CD8-positive, alpha-beta memory T cell (primary cell): ENCODE measurements at regions of chr7 and their contacts with region 1.

Region 1: DNA sequence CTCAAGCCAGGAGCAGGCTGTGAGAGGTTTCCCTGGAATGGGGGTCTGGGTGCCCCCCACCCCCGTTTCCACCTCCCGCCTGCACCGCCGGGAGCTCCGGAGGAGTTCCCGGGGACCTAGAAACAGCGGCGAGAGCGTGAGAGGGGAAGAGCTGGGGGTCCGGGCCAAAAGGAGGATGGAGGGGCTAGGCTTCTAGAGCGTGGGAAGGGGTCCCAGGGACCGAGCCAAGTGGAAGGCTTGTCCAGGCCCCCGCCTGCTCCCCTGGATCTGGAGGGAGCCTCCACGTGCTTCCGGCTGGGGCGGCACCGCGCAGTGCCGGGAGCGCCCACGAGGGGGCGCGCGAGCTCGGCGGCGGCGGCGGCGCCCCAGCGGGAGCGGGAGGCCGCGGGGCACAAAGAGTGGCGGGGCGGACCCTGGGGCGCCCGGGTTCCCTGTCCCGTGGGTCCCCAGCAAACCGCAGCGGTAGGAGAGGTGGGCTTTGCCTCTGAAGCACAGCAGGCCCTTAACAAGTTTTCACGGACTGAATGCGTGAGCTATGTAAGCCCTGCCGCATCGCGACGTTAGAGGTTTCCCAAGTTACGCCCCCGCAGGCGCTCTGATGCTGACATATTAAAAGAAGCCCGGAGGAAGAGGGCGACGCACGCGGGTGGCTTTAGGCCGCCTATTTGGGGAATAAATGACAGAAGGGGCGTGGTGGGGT is 104.4 kb upstream of the LRRC4 start:
- DNase-seq: peak; percentile 48 to 72 (median 62)
- H3K4me3 ChIP-seq: peak overlapping the region; percentile 67
- H3K4me3 Mint-ChIP-seq: peak overlapping the region; percentile 80 to 91 (median 81)
- H3K27ac ChIP-seq: no peak overlapping the region
- H3K27ac Mint-ChIP-seq: peak overlapping the region in 1 of 8 donors; percentile 81
- H3K4me1 ChIP-seq: peaks cover 17% of the 10 kb centered on the region
- H3K4me1 Mint-ChIP-seq: peaks cover 11 to 14% (median 11%) of the 10 kb centered on the region in 3 donors
- H3K27me3 ChIP-seq: peaks cover 14% of the 10 kb centered on the region
- H3K27me3 Mint-ChIP-seq: peaks cover 30 to 48% of the 10 kb centered on the region in 2 donors

Region 2: DNA sequence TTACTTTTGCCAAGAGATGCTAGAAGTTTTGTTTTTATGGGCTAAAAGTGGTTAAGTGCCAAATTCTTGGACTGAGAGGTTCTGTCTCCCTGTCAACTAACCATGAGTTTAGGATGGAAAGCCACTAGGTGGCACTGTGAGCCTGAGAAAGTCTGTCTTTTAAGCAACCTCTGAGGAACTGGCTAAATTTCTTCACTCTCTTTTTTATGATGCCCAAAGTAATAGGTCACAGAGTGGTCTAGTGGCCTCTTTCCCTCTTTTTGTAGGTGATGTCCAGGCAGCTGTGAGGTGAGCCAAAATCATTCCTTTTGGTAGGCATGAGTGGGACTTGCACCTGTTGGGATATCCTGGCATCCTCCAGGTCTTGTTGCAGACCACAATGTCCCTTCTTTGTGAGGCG is 426.9 kb before region 1 on chr7:
- CTCF ChIA-PET with region 1: interaction called, 13 read pairs
- POLR2A ChIA-PET with region 1: no interaction called
- DNase-seq: peak; percentile 36 to 77 (median 56)
- H3K4me3 ChIP-seq: no peak overlapping the region
- H3K4me3 Mint-ChIP-seq: no peak overlapping the region
- H3K27ac ChIP-seq: no peak overlapping the region
- H3K27ac Mint-ChIP-seq: peak overlapping the region in 3 of 8 donors; percentile 8 to 18 (median 15)
- H3K4me1 ChIP-seq: no peaks in the 10 kb centered on the region
- H3K4me1 Mint-ChIP-seq: peaks cover 0 to 3% (median 0%) of the 10 kb centered on the region in 3 donors
- H3K27me3 ChIP-seq: no peaks in the 10 kb centered on the region
- H3K27me3 Mint-ChIP-seq: no peaks in the 10 kb centered on the region

Region 3: DNA sequence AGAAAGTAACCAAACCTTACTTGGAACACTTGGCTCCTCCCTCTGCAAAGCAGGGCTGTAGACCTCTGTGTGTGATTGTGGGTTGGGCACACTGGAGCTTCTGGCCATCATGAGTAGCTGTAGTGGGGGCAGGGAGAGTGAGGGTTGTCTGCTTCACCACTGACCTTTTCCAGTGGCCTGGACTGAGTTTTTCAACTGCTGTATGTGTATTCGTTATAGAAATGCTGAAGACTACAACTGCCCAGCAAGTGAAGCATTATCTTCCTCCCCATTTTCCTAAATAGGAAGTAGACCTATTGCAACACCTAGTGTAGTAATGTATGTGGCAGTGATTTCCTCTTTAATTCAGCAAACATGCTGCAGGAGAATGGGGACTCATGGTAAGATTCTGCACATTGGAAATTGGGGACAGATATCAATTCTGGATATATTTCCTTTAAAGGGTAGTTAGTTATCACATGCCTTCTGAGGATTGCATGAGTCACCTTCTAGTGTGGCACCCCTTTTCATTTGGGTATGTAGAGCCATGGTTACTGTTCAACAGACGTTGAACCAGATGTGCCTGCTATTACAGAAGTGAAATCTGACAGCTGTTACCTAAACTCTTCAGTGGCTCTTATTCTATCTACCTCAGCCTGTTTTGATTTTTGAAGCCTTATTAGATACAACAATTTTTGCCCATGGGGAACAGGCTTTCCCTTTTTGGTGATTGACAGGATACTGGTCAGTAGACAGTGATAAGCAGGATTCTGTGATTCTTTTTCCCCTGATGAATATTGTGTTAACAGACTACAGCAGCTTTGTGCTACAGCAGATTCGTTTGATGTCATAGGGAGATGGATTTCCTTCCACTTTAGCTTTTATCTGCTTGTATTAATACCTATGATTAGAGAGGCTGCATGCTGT is 352.8 kb before region 1 on chr7:
- CTCF ChIA-PET with region 1: no interaction called
- POLR2A ChIA-PET with region 1: no interaction called
- DNase-seq: no peak
- H3K4me3 ChIP-seq: no peak overlapping the region
- H3K4me3 Mint-ChIP-seq: no peak overlapping the region
- H3K27ac ChIP-seq: no peak overlapping the region
- H3K27ac Mint-ChIP-seq: peak overlapping the region in 2 of 8 donors; percentile 10 to 30
- H3K4me1 ChIP-seq: no peaks in the 10 kb centered on the region
- H3K4me1 Mint-ChIP-seq: peaks cover 30 to 73% (median 61%) of the 10 kb centered on the region in 3 donors
- H3K27me3 ChIP-seq: no peaks in the 10 kb centered on the region
- H3K27me3 Mint-ChIP-seq: no peaks in the 10 kb centered on the region

Region 4: GRCh38 chr7:128104035-128104742 is 31.5 kb before region 1 on chr7:
- CTCF ChIA-PET with region 1: interaction called, 35 read pairs
- POLR2A ChIA-PET with region 1: interaction called, 4 read pairs
- DNase-seq: peak in 1 of 5 donors; percentile 17
- H3K4me3 ChIP-seq: peak overlapping the region; percentile 62
- H3K4me3 Mint-ChIP-seq: peak overlapping the region; percentile 79 to 95 (median 89)
- H3K27ac ChIP-seq: no peak overlapping the region
- H3K27ac Mint-ChIP-seq: peak overlapping the region in 6 of 8 donors; percentile 9 to 95 (median 64)
- H3K4me1 ChIP-seq: peaks cover 54% of the 10 kb centered on the region
- H3K4me1 Mint-ChIP-seq: peaks cover 49 to 78% (median 60%) of the 10 kb centered on the region in 3 donors
- H3K27me3 ChIP-seq: no peaks in the 10 kb centered on the region
- H3K27me3 Mint-ChIP-seq: no peaks in the 10 kb centered on the region

Region 5: GRCh38 chr7:128155100-128155740 is 19.6 kb after region 1 on chr7:
- CTCF ChIA-PET with region 1: interaction called, 15 read pairs
- POLR2A ChIA-PET with region 1: no interaction called
- DNase-seq: no peak
- H3K4me3 ChIP-seq: no peak overlapping the region
- H3K4me3 Mint-ChIP-seq: no peak overlapping the region
- H3K27ac ChIP-seq: no peak overlapping the region
- H3K27ac Mint-ChIP-seq: no peak overlapping the region
- H3K4me1 ChIP-seq: no peaks in the 10 kb centered on the region
- H3K4me1 Mint-ChIP-seq: no peaks in the 10 kb centered on the region
- H3K27me3 ChIP-seq: no peaks in the 10 kb centered on the region
- H3K27me3 Mint-ChIP-seq: peaks cover 12 to 28% of the 10 kb centered on the region in 2 donors

Region 6: DNA sequence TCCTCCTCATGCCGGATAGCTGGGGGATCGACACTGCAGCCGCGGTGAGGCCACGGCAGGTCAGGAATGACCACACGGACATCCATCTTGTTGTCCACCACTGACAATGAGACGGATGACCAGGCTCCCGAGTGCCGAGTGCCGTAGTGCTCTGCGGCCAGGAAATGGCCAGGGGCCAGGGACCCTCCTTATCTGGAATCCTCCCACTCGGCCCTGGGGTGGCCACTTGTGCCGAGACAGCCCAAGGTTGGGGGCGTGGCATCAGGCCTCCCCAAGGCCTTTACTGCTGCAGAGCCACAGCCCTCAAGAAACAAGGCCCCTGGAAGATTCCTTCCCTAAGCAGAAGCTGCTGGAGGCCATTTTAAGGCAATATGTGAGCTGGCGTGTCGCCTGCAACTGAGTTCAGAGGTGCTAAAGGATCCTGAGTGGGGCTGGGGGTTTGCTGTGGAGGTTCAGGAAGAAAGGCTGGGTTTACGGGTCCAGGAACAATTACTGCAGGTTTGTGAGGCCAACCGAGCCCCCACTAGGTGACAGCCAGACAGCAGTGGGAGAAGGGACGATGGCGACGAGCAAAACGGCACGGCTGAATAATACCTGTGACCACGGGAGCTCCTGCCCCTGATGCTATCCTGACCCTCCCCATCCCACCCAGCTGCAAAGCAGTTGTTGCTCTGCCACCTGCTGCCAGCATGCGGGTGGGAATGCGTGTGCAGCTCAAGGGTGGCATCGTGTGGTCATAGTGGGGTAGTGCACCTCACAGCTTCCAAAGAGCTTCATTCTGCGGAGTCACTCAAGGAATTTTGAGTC is 73.8 kb after region 1 on chr7:
- CTCF ChIA-PET with region 1: interaction called, 32 read pairs
- POLR2A ChIA-PET with region 1: no interaction called
- DNase-seq: peak; percentile 43 to 71 (median 53)
- H3K4me3 ChIP-seq: no peak overlapping the region
- H3K4me3 Mint-ChIP-seq: no peak overlapping the region
- H3K27ac ChIP-seq: no peak overlapping the region
- H3K27ac Mint-ChIP-seq: peak overlapping the region in 1 of 8 donors; percentile 31
- H3K4me1 ChIP-seq: no peaks in the 10 kb centered on the region
- H3K4me1 Mint-ChIP-seq: peaks cover 0 to 2% (median 0%) of the 10 kb centered on the region in 3 donors
- H3K27me3 ChIP-seq: peaks cover 4% of the 10 kb centered on the region
- H3K27me3 Mint-ChIP-seq: peaks cover 9 to 24% of the 10 kb centered on the region in 2 donors

Region 7: GRCh38 chr7:128236924-128237586 is 101.4 kb after region 1 on chr7:
- CTCF ChIA-PET with region 1: no interaction called
- POLR2A ChIA-PET with region 1: no interaction called
- DNase-seq: peak in 3 of 5 donors; percentile 3 to 50 (median 18)
- H3K4me3 ChIP-seq: no peak overlapping the region
- H3K4me3 Mint-ChIP-seq: no peak overlapping the region
- H3K27ac ChIP-seq: no peak overlapping the region
- H3K27ac Mint-ChIP-seq: peak overlapping the region in 4 of 8 donors; percentile 8 to 86 (median 66)
- H3K4me1 ChIP-seq: no peaks in the 10 kb centered on the region
- H3K4me1 Mint-ChIP-seq: peaks cover 15 to 16% (median 15%) of the 10 kb centered on the region in 3 donors
- H3K27me3 ChIP-seq: no peaks in the 10 kb centered on the region
- H3K27me3 Mint-ChIP-seq: peaks cover 21% of the 10 kb centered on the region in 2 donors

Region 8: GRCh38 chr7:128322040-128322643 is 186.5 kb after region 1 on chr7:
- CTCF ChIA-PET with region 1: interaction called, 16 read pairs
- POLR2A ChIA-PET with region 1: no interaction called
- DNase-seq: peak in 2 of 5 donors; percentile 28 to 38
- H3K4me3 ChIP-seq: no peak overlapping the region
- H3K4me3 Mint-ChIP-seq: peak overlapping the region; percentile 12 to 86 (median 51)
- H3K27ac ChIP-seq: no peak overlapping the region
- H3K27ac Mint-ChIP-seq: peak overlapping the region; percentile 30 to 90 (median 66)
- H3K4me1 ChIP-seq: peaks cover 42% of the 10 kb centered on the region
- H3K4me1 Mint-ChIP-seq: peaks cover 47 to 52% (median 49%) of the 10 kb centered on the region in 3 donors
- H3K27me3 ChIP-seq: no peaks in the 10 kb centered on the region
- H3K27me3 Mint-ChIP-seq: no peaks in the 10 kb centered on the region